ENCODE measurements at regions of chr4 and their contacts with region 1.

Region 1: GRCh38 chr4:1746265-1746691 is 25.0 kb downstream of the TACC3 start:
- DNase-seq: peak; percentile 53 to 67 (median 64)
- H3K4me3 ChIP-seq: no peak overlapping the region
- H3K4me3 Mint-ChIP-seq: no peak overlapping the region
- H3K27ac ChIP-seq: no peak overlapping the region
- H3K27ac Mint-ChIP-seq: no peak overlapping the region
- H3K4me1 ChIP-seq: no peaks in the 10 kb centered on the region
- H3K4me1 Mint-ChIP-seq: peaks cover 0 to 5% (median 0%) of the 10 kb centered on the region in 4 donors
- H3K27me3 ChIP-seq: no peaks in the 10 kb centered on the region
- H3K27me3 Mint-ChIP-seq: no peaks in the 10 kb centered on the region

Region 2: GRCh38 chr4:1809754-1810511 is 63.7 kb after region 1 on chr4:
- CTCF ChIA-PET with region 1: interaction called, 5 read pairs
- POLR2A ChIA-PET with region 1: no interaction called
- intact Hi-C with region 1: loop called (anchors 1 kb)
- DNase-seq: peak; percentile 57 to 65 (median 60)
- H3K4me3 ChIP-seq: no peak overlapping the region
- H3K4me3 Mint-ChIP-seq: no peak overlapping the region
- H3K27ac ChIP-seq: no peak overlapping the region
- H3K27ac Mint-ChIP-seq: no peak overlapping the region
- H3K4me1 ChIP-seq: no peaks in the 10 kb centered on the region
- H3K4me1 Mint-ChIP-seq: peaks cover 0 to 1% (median 0%) of the 10 kb centered on the region in 4 donors
- H3K27me3 ChIP-seq: no peaks in the 10 kb centered on the region
- H3K27me3 Mint-ChIP-seq: no peaks in the 10 kb centered on the region

Region 3: DNA sequence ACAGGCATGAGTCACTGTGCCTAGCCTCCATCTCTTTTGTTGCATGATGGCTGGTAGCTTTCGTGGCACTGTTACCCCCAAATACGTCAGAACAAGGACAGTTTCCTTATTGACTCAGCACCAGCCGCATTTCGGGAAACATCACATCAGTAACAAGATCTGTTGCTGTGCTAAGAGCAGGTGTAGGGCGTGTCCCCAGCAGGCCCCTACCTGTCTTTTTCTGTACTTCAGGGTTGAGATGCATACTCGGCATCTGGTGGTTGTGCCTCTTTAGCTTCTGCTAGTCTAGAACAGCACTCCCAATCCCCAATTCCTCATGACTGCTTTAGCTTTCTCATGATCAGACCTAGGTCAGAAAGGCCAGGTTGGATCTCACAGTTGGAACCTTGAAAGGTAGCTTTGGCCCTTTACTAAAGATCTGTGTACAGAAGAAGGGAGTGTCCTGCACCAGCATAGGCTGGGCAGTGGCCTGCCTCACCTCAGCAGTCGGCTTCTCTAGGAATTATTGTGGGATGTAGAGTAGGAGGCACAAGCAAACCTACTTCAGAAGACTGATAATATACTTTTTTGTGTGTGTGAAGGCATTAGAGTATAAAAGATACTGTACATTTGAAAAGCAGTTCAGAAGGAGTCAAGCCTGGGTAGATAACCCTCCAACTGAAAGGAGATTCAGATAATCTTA is 161.7 kb after region 1 on chr4:
- CTCF ChIA-PET with region 1: interaction called, 160 read pairs
- POLR2A ChIA-PET with region 1: no interaction called
- intact Hi-C with region 1: no loop called
- DNase-seq: no peak
- H3K4me3 ChIP-seq: no peak overlapping the region
- H3K4me3 Mint-ChIP-seq: peak overlapping the region in 1 of 8 donors; percentile 46
- H3K27ac ChIP-seq: no peak overlapping the region
- H3K27ac Mint-ChIP-seq: peak overlapping the region in 6 of 7 donors; percentile 17 to 81 (median 66)
- H3K4me1 ChIP-seq: peaks cover 32% of the 10 kb centered on the region
- H3K4me1 Mint-ChIP-seq: peaks cover 10 to 37% (median 26%) of the 10 kb centered on the region in 4 donors
- H3K27me3 ChIP-seq: no peaks in the 10 kb centered on the region
- H3K27me3 Mint-ChIP-seq: no peaks in the 10 kb centered on the region

Region 4: GRCh38 chr4:2948895-2949765 is 1202.9 kb after region 1 on chr4:
- CTCF ChIA-PET with region 1: no interaction called
- POLR2A ChIA-PET with region 1: no interaction called
- intact Hi-C with region 1: no loop called
- DNase-seq: no peak
- H3K4me3 ChIP-seq: no peak overlapping the region
- H3K4me3 Mint-ChIP-seq: no peak overlapping the region
- H3K27ac ChIP-seq: no peak overlapping the region
- H3K27ac Mint-ChIP-seq: peak overlapping the region in 1 of 7 donors; percentile 30
- H3K4me1 ChIP-seq: no peaks in the 10 kb centered on the region
- H3K4me1 Mint-ChIP-seq: peaks cover 2 to 5% (median 4%) of the 10 kb centered on the region in 4 donors
- H3K27me3 ChIP-seq: no peaks in the 10 kb centered on the region
- H3K27me3 Mint-ChIP-seq: no peaks in the 10 kb centered on the region

Measured in CD4-positive, alpha-beta memory T cell (primary cell).